ENCODE measurements at regions of chr12 and their contacts with region 1.

Region 1: GRCh38 chr12:130452546-130452945 is 114.9 kb downstream of the PIWIL1 start:
- DNase-seq: no peak
- ATAC-seq: no peak

Region 2: GRCh38 chr12:130491421-130492357 is 39.1 kb after region 1 on chr12:
- intact Hi-C with region 1: no loop called
- DNase-seq: no peak
- ATAC-seq: no peak

Region 3: DNA sequence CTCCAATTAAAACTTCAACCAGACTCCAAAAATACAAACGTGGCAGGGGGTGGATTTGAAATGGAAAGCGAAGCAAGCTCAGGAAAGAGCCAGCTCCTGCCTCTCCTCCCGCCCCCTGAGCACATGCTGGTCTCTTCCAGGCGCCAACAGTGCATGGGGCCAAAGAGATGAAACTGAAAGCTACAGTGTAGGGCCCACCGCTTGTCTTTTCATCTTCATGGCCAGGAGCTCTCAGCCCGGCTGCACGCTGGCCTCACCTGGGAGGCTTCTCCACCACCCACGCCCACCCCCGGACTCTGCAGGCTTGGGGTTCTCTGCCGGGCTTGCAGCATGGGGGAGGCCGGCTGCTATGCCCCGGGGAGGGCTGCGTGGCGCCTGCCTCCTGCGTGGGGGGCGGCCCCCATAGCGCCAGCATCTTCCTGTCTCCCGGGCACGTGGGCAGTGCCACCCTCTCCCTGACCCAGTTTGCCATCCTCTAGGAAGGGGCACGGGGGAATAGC is 261.6 kb after region 1 on chr12:
- intact Hi-C with region 1: loop called (anchors 5 kb)
- DNase-seq: no peak
- ATAC-seq: peak; percentile 48